Ascending aorta (tissue), 2 donors: ENCODE measurements at regions of chr5 and their contacts with region 1.

Region 1: GRCh38 chr5:142324871-142325724 is at the start of gene SPRY4:
- DNase-seq: peak; percentile 67 to 96
- H3K4me3 ChIP-seq: peak within 1 kb of the TSS; percentile 83 to 90
- H3K27ac ChIP-seq: peak within 1 kb of the TSS; percentile 96 to 98
- H3K4me1 ChIP-seq: peaks cover 3 to 17% of the 10 kb centered on the region in 2 donors
- H3K27me3 ChIP-seq: no peaks in the 10 kb centered on the region
- CTCF ChIP-seq: peak in 2 of 3 experiments; percentile 1 to 5
- total RNA-seq, gene SPRY4: 111 TPM

Region 2: DNA sequence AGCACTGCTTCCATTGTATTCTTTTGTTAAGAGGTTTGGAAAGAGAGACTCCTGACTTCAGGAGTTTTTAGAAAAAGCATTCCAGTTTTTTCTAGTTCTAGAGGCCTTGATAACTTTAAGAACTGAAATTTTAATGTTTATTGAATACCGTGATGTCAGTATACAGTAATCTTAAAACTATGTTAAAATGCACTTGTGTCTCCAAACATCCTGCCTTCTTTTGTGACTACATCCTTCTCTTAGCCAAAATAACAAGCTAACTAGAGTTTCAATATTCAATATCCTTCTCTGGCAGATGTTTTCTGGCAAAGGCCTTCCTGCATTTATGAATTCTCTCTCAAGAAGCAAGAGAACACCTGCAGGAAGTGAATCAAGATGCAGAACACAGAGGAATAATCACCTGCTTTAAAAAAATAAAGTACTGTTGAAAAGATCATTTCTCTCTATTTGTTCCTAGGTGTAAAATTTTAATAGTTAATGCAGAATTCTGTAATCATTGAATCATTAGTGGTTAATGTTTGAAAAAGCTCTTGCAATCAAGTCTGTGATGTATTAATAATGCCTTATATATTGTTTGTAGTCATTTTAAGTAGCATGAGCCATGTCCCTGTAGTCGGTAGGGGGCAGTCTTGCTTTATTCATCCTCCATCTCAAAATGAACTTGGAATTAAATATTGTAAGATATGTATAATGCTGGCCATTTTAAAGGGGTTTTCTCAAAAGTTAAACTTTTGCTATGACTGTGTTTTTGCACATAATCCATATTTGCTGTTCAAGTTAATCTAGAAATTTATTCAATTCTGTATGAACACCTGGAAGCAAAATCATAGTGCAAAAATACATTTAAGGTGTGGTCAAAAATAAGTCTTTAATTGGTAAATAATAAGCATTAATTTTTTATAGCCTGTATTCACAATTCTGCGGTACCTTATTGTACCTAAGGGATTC is 173.4 kb before region 1 on chr5:
- intact Hi-C with region 1: loop called (anchors 5 kb)
- DNase-seq: peak in 1 of 2 donors; percentile 73
- H3K4me3 ChIP-seq: no peak overlapping the region
- H3K27ac ChIP-seq: no peak overlapping the region
- H3K4me1 ChIP-seq: peaks cover 0 to 7% of the 10 kb centered on the region in 2 donors
- H3K27me3 ChIP-seq: no peaks in the 10 kb centered on the region
- CTCF ChIP-seq: peak; percentile 67 to 87 (median 80)

Region 3: GRCh38 chr5:142192286-142193113 is 132.6 kb before region 1 on chr5:
- intact Hi-C with region 1: loop called (anchors 2 kb)
- DNase-seq: peak in 1 of 2 donors; percentile 45
- H3K4me3 ChIP-seq: peak overlapping the region in 1 of 2 donors; percentile 28
- H3K27ac ChIP-seq: peak overlapping the region; percentile 25 to 76
- H3K4me1 ChIP-seq: peaks cover 0 to 19% of the 10 kb centered on the region in 2 donors
- H3K27me3 ChIP-seq: no peaks in the 10 kb centered on the region
- CTCF ChIP-seq: no peak

Region 4: DNA sequence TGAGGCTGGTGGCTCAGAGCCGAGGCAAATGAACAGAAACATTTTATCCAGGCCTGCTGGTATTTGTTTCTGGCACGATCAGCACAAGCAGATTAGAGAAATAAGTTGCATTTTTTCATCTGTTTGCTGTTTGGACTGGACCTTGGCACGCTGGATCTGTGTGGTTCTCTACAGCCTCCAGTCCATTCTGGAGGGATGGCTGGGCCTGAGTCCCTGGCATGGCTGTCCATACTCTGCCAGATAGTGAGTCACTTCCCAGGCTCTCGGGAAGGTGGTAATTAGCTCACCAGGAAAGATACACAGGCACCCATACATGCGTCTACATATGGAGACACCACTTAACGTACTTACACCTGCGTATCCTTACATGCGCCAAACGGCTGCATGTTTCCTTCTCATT is 78.8 kb before region 1 on chr5:
- intact Hi-C with region 1: loop called (anchors 2 kb)
- DNase-seq: peak; percentile 20 to 90
- H3K4me3 ChIP-seq: no peak overlapping the region
- H3K27ac ChIP-seq: peak overlapping the region; percentile 81 to 88
- H3K4me1 ChIP-seq: peaks cover 3 to 42% of the 10 kb centered on the region in 2 donors
- H3K27me3 ChIP-seq: no peaks in the 10 kb centered on the region
- CTCF ChIP-seq: no peak

Region 5: DNA sequence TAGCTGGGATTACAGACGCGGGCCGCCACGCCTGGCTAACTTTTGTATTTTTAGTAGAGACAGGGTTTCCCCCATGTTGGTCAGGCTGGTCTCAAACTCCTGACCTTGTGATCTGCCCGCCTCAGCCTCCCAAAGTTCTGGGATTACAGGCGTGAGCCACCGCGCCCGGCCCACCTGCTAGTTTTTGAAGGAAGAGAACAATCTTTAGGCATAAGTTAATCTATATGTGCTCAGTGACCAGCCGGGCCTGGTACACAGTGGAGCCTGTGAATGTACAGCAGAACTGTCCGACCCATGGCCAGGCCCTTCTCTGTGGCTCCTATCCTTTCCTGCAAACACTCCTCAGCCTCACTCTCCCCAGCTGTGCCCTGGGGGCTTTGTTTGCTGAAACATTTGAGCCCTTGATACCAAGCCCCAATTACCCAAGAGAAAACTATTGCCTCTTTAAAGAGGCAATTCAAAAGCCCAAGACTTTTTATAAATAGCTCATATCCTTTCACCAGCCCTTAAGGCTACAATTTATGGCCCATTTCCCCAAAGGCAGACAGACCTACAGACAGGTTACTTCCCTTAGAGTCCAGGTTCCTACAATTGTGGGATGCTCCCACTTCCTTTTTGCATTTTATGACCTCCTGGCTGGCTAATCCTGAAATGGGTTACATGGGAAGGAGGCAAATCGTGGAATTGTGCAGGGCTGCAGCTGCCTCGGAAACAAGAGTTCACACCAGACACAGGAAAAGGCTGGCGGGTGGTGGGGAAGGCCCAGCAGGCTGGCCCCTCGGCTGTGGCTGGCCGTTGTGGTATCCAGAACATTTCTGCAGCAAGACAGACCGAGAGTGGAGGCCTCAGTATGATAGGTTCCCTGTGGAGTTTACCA is 37.8 kb before region 1 on chr5:
- intact Hi-C with region 1: loop called (anchors 5 kb)
- DNase-seq: no peak
- H3K4me3 ChIP-seq: no peak overlapping the region
- H3K27ac ChIP-seq: peak overlapping the region; percentile 5 to 41
- H3K4me1 ChIP-seq: peaks cover 4 to 7% of the 10 kb centered on the region in 2 donors
- H3K27me3 ChIP-seq: no peaks in the 10 kb centered on the region
- CTCF ChIP-seq: no peak

Region 6: GRCh38 chr5:142356716-142357473 is 31.8 kb after region 1 on chr5:
- intact Hi-C with region 1: loop called (anchors 1 kb)
- DNase-seq: peak; percentile 67 to 95
- H3K4me3 ChIP-seq: peak overlapping the region; percentile 82 to 89
- H3K27ac ChIP-seq: peak overlapping the region; percentile 99 to 100
- H3K4me1 ChIP-seq: peaks cover 8 to 9% of the 10 kb centered on the region in 2 donors
- H3K27me3 ChIP-seq: no peaks in the 10 kb centered on the region
- CTCF ChIP-seq: peak in 1 of 3 experiments; percentile 14

Region 7: DNA sequence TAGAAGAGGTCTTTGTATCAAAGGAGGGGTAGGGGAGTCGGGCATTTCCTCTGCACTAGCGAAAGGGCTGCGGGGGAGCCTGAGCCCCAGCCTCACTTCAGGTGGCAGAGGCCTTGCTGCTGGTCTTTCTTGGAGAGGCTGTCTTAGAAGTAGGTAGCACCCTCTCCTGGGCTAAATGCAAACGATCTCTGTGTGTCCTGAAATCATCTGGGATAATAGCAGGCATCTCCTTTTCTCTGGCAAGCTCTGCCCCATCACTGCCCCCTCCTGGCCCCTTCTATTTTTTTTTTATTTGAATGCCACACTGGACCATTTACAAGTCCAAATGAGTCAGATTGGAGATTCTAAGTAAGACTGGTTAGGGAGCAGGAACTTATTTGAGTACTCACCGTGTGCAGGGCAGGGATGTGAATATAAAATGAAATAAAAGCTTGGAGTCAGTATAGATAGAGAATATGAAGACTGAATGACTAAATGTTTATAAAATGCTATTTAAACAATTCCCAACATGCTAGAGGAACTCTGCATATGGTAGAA is 223.7 kb after region 1 on chr5:
- intact Hi-C with region 1: loop called (anchors 5 kb)
- DNase-seq: peak in 1 of 2 donors; percentile 79
- H3K4me3 ChIP-seq: no peak overlapping the region
- H3K27ac ChIP-seq: no peak overlapping the region
- H3K4me1 ChIP-seq: peaks cover 0 to 5% of the 10 kb centered on the region in 2 donors
- H3K27me3 ChIP-seq: no peaks in the 10 kb centered on the region
- CTCF ChIP-seq: peak; percentile 47 to 72 (median 68)